H1 (cell line): ENCODE measurements at regions of chr4 and their contacts with region 1.

Region 1: DNA sequence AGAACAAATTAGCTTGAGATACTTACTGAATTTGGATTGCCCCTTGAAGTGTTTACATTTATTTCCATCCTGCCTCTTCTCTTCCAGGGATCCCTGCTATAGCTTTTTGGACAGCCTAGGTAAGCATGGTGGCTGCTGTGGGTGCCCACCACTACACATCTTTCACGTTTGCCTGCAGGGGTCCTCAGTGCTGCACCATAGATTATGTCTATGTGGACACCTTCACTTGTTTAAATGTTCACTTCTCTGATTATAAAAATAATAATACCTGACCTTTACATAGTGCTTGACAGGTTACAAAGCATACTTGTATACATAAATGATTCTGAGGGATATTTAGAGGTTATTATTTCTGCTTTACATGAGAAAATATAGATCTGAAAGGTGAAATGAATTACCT is 67.9 kb upstream of the SLC4A4 start:
- DNase-seq: peak in 1 of 2 experiments; percentile 53
- H3K4me3 ChIP-seq: no peak overlapping the region
- H3K27ac ChIP-seq: no peak overlapping the region
- H3K4me1 ChIP-seq: no peaks in the 10 kb centered on the region
- H3K27me3 ChIP-seq: no peaks in the 10 kb centered on the region
- CTCF ChIP-seq: peak; percentile 43 to 54 (median 50)
- EP300 ChIP-seq: no peak
- POLR2A ChIP-seq: no peak
- RAD21 ChIP-seq: peak; percentile 78 to 79

Region 2: GRCh38 chr4:71259911-71260331 is 11.0 kb before region 1 on chr4:
- CTCF ChIA-PET with region 1: interaction called, 23 read pairs
- POLR2A ChIA-PET with region 1: no interaction called
- DNase-seq: no peak
- H3K4me3 ChIP-seq: no peak overlapping the region
- H3K27ac ChIP-seq: no peak overlapping the region
- H3K4me1 ChIP-seq: peaks cover 0 to 5% (median 0%) of the 10 kb centered on the region in 4 experiments; a peak in 1 of 7 replicates
- H3K27me3 ChIP-seq: no peaks in the 10 kb centered on the region
- CTCF ChIP-seq: no peak
- EP300 ChIP-seq: no peak
- POLR2A ChIP-seq: no peak
- RAD21 ChIP-seq: no peak

Region 3: DNA sequence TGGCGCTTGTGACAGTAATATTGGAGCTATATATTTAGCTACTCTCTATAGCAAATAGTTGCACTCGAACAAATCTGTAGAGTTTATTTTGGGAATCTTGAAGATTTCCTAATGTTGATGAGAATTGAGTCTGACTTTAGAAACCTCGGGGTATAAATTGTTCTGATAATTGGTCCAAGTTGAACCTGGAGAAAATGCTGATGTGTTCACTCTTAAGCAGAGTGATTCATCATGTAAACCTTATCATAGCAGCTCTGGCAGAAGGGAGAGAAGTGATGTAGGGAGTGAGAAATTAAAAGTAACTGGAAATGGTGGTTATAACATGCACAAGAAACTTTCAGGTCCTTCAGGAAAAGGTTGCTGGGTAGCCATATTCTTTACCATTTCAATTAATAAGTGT is 51.5 kb after region 1 on chr4:
- CTCF ChIA-PET with region 1: interaction called, 10 read pairs
- POLR2A ChIA-PET with region 1: no interaction called
- DNase-seq: no peak
- H3K4me3 ChIP-seq: no peak overlapping the region
- H3K27ac ChIP-seq: no peak overlapping the region
- H3K4me1 ChIP-seq: peaks cover 0 to 4% (median 0%) of the 10 kb centered on the region in 4 experiments; a peak in 1 of 7 replicates
- H3K27me3 ChIP-seq: no peaks in the 10 kb centered on the region
- CTCF ChIP-seq: no peak
- EP300 ChIP-seq: no peak
- POLR2A ChIP-seq: no peak
- RAD21 ChIP-seq: no peak

Region 4: DNA sequence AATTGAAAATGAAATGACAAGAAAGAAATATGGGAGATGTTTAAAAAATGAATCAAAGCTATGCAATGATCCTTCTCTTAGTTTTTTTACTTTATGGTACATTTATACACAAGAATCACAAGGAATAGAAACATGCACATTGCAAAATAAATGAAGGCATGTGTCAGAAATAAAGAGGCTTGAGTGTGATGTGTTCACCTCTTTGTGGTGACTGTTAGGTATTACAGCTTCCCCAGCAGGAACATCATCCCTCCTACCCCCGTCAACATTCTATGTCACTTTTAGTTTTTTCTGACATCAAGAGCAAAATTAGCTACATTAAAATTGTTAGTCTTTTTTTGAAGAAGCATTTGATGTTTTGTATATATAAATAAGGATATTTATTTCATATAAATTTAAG is 282.7 kb after region 1 on chr4:
- CTCF ChIA-PET with region 1: interaction called, 25 read pairs
- POLR2A ChIA-PET with region 1: no interaction called
- DNase-seq: no peak
- H3K4me3 ChIP-seq: no peak overlapping the region
- H3K27ac ChIP-seq: no peak overlapping the region
- H3K4me1 ChIP-seq: no peaks in the 10 kb centered on the region; a peak in 1 of 7 replicates
- H3K27me3 ChIP-seq: no peaks in the 10 kb centered on the region
- CTCF ChIP-seq: peak in 2 of 3 experiments; percentile 32 to 66; a peak in 2 of 4 replicates
- EP300 ChIP-seq: no peak
- POLR2A ChIP-seq: no peak
- RAD21 ChIP-seq: peak; percentile 77 to 80

Region 5: GRCh38 chr4:71694961-71695360 is 424.1 kb after region 1 on chr4:
- CTCF ChIA-PET with region 1: no interaction called
- POLR2A ChIA-PET with region 1: no interaction called
- DNase-seq: no peak
- H3K4me3 ChIP-seq: no peak overlapping the region
- H3K27ac ChIP-seq: no peak overlapping the region
- H3K4me1 ChIP-seq: peaks cover 0 to 3% (median 1%) of the 10 kb centered on the region in 4 experiments; a peak in 3 of 7 replicates
- H3K27me3 ChIP-seq: peaks cover 0 to 1% (median 0%) of the 10 kb centered on the region in 4 experiments; a peak in 1 of 7 replicates
- CTCF ChIP-seq: no peak
- EP300 ChIP-seq: no peak
- POLR2A ChIP-seq: no peak
- RAD21 ChIP-seq: no peak

Region 6: DNA sequence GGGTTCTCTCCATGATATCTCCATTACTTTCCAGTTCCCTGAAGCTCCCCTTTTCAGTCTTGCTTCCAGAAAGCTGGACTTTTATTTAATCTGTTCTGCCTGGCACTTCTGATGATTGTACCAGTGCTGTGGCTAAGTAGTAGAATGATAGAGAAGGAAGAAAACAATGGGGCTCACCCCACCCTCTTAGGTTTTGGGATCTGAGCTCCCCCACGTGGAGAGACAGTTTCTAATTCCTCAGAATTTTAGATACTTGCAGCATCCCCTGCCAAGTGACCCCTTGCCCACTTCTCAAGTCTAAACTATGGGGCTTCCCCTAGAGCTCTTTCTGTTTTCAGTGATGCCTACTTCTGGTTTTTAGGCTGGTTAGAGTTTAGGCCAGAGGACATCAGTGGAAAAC is 439.1 kb after region 1 on chr4:
- CTCF ChIA-PET with region 1: interaction called, 21 read pairs
- POLR2A ChIA-PET with region 1: no interaction called
- DNase-seq: no peak
- H3K4me3 ChIP-seq: no peak overlapping the region
- H3K27ac ChIP-seq: no peak overlapping the region
- H3K4me1 ChIP-seq: no peaks in the 10 kb centered on the region
- H3K27me3 ChIP-seq: no peaks in the 10 kb centered on the region
- CTCF ChIP-seq: peak in 2 of 3 experiments; percentile 29 to 37; a peak in 3 of 4 replicates
- EP300 ChIP-seq: no peak
- POLR2A ChIP-seq: no peak
- RAD21 ChIP-seq: peak; percentile 65 to 73